MCF 10A (cell line): ENCODE measurements at regions of chr13 and their contacts with region 1.

Region 1: GRCh38 chr13:50123862-50124536 is 108.8 kb downstream of the KCNRG start:
- DNase-seq: peak; percentile 92
- H3K4me3 Mint-ChIP-seq: peak overlapping the region; percentile 87
- H3K27ac Mint-ChIP-seq: peak overlapping the region; percentile 94
- H3K4me1 Mint-ChIP-seq: peaks cover 28% of the 10 kb centered on the region
- H3K27me3 Mint-ChIP-seq: no peaks in the 10 kb centered on the region
- CTCF ChIP-seq: no peak

Region 2: DNA sequence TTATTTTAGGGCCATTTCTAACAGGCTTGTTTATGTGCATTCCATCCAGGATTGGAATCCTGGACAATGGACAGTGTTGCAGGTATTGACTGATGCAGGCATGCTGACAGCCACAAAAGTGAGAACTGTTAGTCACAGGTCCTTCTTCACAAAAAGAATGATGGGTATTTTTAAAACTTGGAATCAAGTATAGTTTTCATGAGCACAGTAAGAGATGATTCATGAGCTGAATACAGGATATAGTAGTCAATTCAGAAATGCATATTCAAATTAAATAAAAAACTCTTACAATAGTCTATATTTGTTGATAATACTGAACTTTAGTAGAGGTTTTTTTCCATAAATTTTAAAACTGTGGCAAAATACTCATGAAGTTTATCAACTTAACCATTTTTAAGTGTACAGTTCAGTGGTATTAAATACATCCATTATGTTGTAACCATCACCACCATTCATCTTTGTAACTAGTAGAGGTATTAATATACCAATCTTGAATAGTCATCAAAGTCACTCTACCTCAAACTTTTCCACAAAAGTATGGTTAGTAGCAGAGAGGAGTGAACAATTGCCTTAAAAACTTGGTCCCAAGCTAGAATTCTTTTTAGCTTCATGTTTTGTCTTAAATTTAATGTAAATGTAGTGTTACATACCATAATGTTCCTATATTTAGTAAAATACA is 29.2 kb before region 1 on chr13:
- CTCF ChIA-PET with region 1: no interaction called
- POLR2A ChIA-PET with region 1: interaction called, 20 read pairs
- intact Hi-C with region 1: no loop called
- DNase-seq: peak; percentile 10
- H3K4me3 Mint-ChIP-seq: no peak overlapping the region
- H3K27ac Mint-ChIP-seq: no peak overlapping the region
- H3K4me1 Mint-ChIP-seq: no peaks in the 10 kb centered on the region
- H3K27me3 Mint-ChIP-seq: no peaks in the 10 kb centered on the region
- CTCF ChIP-seq: no peak

Region 3: GRCh38 chr13:50136226-50136625 is 12.2 kb after region 1 on chr13:
- CTCF ChIA-PET with region 1: no interaction called
- POLR2A ChIA-PET with region 1: interaction called, 17 read pairs
- intact Hi-C with region 1: no loop called
- DNase-seq: no peak
- H3K4me3 Mint-ChIP-seq: no peak overlapping the region
- H3K27ac Mint-ChIP-seq: no peak overlapping the region
- H3K4me1 Mint-ChIP-seq: peaks cover 4% of the 10 kb centered on the region
- H3K27me3 Mint-ChIP-seq: no peaks in the 10 kb centered on the region
- CTCF ChIP-seq: no peak

Region 4: GRCh38 chr13:50161052-50161451 is 37.1 kb after region 1 on chr13:
- CTCF ChIA-PET with region 1: interaction called, 3 read pairs
- POLR2A ChIA-PET with region 1: interaction called, 26 read pairs
- intact Hi-C with region 1: no loop called
- DNase-seq: peak; percentile 86
- H3K4me3 Mint-ChIP-seq: no peak overlapping the region
- H3K27ac Mint-ChIP-seq: no peak overlapping the region
- H3K4me1 Mint-ChIP-seq: peaks cover 18% of the 10 kb centered on the region
- H3K27me3 Mint-ChIP-seq: no peaks in the 10 kb centered on the region
- CTCF ChIP-seq: no peak

Region 5: GRCh38 chr13:50222569-50223332 is 98.8 kb after region 1 on chr13:
- CTCF ChIA-PET with region 1: interaction called, 4 read pairs
- POLR2A ChIA-PET with region 1: interaction called, 64 read pairs
- intact Hi-C with region 1: no loop called
- DNase-seq: peak; percentile 95
- H3K4me3 Mint-ChIP-seq: peak overlapping the region; percentile 72
- H3K27ac Mint-ChIP-seq: peak overlapping the region; percentile 98
- H3K4me1 Mint-ChIP-seq: peaks cover 40% of the 10 kb centered on the region
- H3K27me3 Mint-ChIP-seq: no peaks in the 10 kb centered on the region
- CTCF ChIP-seq: no peak

Region 6: GRCh38 chr13:50415428-50415827 is 291.4 kb after region 1 on chr13:
- CTCF ChIA-PET with region 1: no interaction called
- POLR2A ChIA-PET with region 1: no interaction called
- intact Hi-C with region 1: no loop called
- DNase-seq: no peak
- H3K4me3 Mint-ChIP-seq: no peak overlapping the region
- H3K27ac Mint-ChIP-seq: no peak overlapping the region
- H3K4me1 Mint-ChIP-seq: peaks cover 20% of the 10 kb centered on the region
- H3K27me3 Mint-ChIP-seq: no peaks in the 10 kb centered on the region
- CTCF ChIP-seq: no peak